ENCODE measurements at regions of chr3 and their contacts with region 1.

Region 1: DNA sequence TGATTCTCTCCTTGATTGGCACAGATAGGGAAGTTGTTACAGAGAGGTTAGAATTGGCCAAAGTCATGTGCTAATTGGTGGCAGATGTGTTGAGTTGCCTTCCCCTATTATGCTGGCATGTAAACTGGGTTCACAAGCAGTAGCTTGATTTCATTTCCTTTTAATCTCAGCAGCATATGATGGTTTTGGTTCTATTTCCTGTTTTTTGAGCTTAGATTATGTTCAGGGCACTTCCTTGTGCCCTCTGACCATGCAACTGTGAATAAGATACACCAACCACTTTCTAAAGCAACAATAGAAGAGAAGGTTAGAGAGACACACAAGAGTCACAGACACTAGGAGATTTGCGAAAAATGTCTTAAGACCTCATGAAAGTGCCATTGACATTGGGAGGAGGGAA is 16.5 kb downstream of the HPS3 start:
- DNase-seq: peak in 4 of 10 donors; percentile 4 to 34 (median 20)
- ATAC-seq: peak; percentile 75 to 80
- H3K4me3 Mint-ChIP-seq: no peak overlapping the region
- H3K27ac Mint-ChIP-seq: no peak overlapping the region
- H3K4me1 Mint-ChIP-seq: peaks cover 4 to 18% (median 12%) of the 10 kb centered on the region in 4 donors
- H3K27me3 Mint-ChIP-seq: no peaks in the 10 kb centered on the region

Region 2: DNA sequence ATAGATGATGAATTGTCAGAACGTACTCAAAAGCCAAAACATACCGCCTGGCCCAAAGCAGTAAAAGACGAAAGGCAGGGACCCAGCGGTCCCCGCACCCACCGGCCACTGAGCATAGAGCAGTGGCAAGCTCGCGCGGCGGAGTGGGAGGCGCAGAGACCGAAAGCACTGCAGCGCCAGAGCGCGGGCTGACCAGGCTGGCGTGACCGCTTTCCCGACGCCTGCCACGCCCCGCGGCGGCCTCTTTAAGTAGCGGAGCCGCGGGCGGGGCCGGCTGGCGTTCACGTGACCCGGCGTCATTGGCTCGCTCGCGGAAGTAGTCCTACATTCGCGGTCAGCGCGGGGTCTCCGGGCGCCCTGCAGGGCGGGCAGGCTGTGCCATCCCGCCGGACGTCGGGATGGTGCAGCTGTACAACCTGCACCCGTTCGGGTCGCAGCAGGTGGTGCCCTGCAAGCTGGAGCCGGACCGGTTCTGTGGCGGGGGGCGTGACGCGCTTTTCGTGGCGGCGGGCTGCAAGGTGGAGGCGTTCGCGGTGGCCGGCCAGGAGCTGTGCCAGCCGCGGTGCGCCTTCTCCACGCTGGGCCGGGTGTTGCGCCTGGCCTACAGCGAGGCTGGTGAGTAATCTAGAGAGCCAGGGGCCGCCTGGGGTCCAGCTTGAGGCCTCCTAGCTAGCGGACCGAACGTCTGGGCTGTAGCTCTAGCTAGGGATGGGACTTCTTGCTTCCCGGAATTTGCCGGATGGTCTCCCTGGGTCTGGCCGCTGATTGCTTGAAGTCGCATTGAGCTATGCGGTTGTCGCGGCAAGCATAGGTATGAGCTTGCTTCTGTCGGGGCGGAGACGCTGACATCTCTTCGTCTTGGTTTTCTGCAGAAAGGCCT is 16.4 kb before region 1 on chr3 and contains the start of gene HPS3:
- POLR2A ChIA-PET with region 1: interaction called, 14 read pairs
- DNase-seq: peak; percentile 60 to 88 (median 79)
- ATAC-seq: peak; percentile 87 to 89
- H3K4me3 Mint-ChIP-seq: peak within 1 kb of the TSS; percentile 86 to 98 (median 94)
- H3K27ac Mint-ChIP-seq: peak within 1 kb of the TSS; percentile 82 to 97 (median 93)
- H3K4me1 Mint-ChIP-seq: peaks cover 23 to 50% (median 48%) of the 10 kb centered on the region in 4 donors
- H3K27me3 Mint-ChIP-seq: peaks cover 0 to 18% (median 8%) of the 10 kb centered on the region in 5 donors
- polyA plus RNA-seq, gene HPS3: 31.5 to 41.0 (median 34.8) TPM

Region 3: DNA sequence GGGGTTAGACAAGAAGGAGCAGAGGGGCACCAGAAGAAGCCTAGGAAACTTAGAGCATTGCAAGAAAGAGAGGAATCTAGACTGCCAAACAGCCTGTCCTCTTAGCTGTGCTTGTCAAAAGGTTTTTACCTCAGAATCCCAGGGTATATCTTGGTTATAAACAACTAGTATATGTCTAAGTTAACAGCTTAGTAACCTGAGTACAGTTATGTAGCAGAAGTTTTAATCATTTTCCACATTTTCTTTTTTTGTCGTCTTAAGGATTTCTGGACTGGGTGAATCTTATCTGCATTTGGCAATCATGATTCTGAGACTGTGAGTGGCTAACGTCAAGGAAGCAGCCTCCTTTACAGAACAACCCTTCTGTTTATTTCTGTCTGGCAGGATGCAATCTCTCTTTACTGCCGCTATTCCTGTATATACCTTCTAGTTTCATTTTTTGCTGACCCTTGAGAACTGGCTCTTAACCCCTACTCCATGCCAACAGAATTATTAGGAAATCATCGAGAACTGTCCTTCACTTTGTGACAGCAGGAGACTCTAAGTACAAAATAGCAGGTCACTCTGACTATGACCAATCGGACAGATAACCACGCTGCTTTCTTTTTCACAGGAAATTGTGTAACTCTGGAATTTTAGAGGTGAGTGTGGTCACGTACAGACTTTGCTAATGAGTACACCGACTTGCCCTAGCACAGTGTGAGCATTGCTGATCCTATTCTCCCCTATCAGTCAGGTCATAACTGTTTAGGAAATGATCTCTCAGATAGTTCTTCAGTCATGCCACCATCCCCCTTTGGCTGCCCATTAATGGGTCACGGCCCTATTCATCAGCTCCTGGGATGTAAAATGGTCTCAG is 79.0 kb after region 1 on chr3:
- POLR2A ChIA-PET with region 1: no interaction called
- DNase-seq: peak in 1 of 10 donors; percentile 7
- ATAC-seq: peak; percentile 57 to 69
- H3K4me3 Mint-ChIP-seq: peak overlapping the region; percentile 49 to 83 (median 77)
- H3K27ac Mint-ChIP-seq: peak overlapping the region; percentile 33 to 83 (median 65)
- H3K4me1 Mint-ChIP-seq: peaks cover 10 to 24% (median 19%) of the 10 kb centered on the region in 4 donors
- H3K27me3 Mint-ChIP-seq: no peaks in the 10 kb centered on the region

Region 4: GRCh38 chr3:149258298-149258697 is 112.3 kb after region 1 on chr3:
- POLR2A ChIA-PET with region 1: no interaction called
- DNase-seq: no peak
- ATAC-seq: no peak
- H3K4me3 Mint-ChIP-seq: no peak overlapping the region
- H3K27ac Mint-ChIP-seq: no peak overlapping the region
- H3K4me1 Mint-ChIP-seq: no peaks in the 10 kb centered on the region
- H3K27me3 Mint-ChIP-seq: peaks cover 5 to 10% (median 8%) of the 10 kb centered on the region in 5 donors

Measured in naive thymus-derived CD8-positive, alpha-beta T cell (primary cell).